ENCODE measurements at regions of chr19 and their contacts with region 1.

Region 1: GRCh38 chr19:49473868-49474544 is at the start of gene FLT3LG:
- DNase-seq: peak; percentile 92
- CTCF ChIP-seq: peak; percentile 94

Region 2: GRCh38 chr19:48029431-48029830 is 1444.6 kb before region 1 on chr19:
- CTCF ChIA-PET with region 1: no interaction called
- POLR2A ChIA-PET with region 1: no interaction called
- DNase-seq: no peak
- CTCF ChIP-seq: no peak

Region 3: DNA sequence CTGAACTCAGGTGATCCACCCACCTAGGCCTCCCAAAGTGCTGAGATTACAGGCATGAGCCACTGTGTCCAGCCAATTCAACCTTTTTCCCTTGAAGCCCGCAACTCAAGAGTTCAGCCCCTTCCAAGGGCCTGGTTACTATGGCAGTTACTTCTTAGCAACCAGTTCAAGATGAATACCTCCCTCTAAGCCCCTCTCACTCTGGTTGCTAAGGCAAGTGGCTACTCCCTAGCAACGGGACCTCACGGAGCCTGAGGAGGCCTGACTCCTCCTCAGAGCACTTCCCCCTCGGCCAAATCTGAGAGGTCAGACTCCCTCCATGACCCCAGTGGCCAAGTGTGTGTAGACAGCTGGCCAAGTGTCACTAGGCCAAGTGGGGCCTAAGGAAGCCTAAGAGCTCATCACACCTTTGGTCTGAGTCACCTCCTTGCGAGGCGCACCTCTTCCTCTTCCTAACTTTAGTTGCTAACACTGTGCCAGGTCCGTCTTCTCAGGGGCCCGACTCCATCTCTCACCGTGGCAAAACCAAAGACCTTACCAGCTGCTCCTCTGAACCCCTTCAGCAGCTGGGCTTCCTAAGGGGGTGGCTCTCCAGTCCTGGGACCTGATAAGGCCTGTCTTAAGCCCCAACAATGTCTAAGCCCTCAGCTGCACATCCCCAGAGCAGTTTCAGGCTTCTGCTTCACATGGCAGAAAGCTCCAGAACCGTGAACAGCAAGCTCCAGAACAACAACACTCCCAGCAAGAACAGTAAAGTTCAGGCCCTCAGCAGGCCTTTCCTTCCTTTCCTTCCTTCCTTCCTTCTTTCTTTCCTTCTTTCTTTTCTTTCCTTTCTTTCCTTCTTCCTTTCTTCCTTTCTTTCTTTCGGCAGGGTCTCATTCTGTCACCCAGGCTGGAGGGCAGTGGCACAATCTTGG is 129.2 kb before region 1 on chr19:
- CTCF ChIA-PET with region 1: no interaction called
- POLR2A ChIA-PET with region 1: no interaction called
- DNase-seq: no peak
- CTCF ChIP-seq: no peak

Region 4: GRCh38 chr19:49451430-49452181 is 22.4 kb before region 1 on chr19 and contains the start of gene PIH1D1:
- CTCF ChIA-PET with region 1: interaction called, 72 read pairs
- POLR2A ChIA-PET with region 1: interaction called, 4 read pairs
- DNase-seq: peak; percentile 92
- CTCF ChIP-seq: no peak

Region 5: DNA sequence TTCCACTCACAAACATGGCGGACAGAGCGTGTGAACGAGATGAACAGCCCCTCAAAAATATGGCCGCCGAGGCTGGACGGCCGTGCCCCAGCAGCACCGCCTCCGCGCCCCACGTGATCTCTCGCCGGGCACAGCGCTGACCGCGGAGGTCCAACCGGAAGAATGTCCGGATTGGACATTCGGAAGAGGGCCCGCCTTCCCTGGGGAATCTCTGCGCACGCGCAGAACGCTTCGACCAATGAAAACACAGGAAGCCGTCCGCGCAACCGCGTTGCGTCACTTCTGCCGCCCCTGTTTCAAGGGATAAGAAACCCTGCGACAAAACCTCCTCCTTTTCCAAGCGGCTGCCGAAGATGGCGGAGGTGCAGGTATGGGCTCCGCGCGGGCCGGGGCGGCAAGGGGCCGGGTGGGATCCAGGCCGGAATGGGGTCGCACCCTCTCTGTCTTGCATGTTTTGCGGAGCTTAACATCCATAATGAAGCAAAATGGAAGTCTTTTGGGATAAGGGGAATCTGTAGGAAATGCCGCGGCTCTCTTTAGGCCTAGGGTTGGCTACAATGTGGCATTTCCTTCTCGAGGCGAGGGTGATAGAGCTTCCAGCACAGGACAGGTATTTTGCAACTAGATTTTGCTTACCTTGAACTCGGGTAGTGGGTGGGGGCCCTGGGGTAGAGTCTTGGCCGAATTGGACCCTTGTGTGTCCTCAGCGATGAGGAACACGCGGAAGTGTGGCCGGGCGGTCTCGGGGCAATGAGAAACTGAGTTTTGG is 13.5 kb after region 1 on chr19 and contains the start of gene RPL13A:
- CTCF ChIA-PET with region 1: interaction called, 12 read pairs
- POLR2A ChIA-PET with region 1: interaction called, 16 read pairs
- DNase-seq: peak; percentile 98
- CTCF ChIP-seq: no peak

Region 6: GRCh38 chr19:49497047-49497788 is 23.2 kb after region 1 on chr19:
- CTCF ChIA-PET with region 1: interaction called, 11 read pairs
- POLR2A ChIA-PET with region 1: interaction called, 4 read pairs
- DNase-seq: peak; percentile 56
- CTCF ChIP-seq: no peak

Measured in GM10248 (cell line).